ENCODE measurements at regions of chr5 and their contacts with region 1.

Region 1: DNA sequence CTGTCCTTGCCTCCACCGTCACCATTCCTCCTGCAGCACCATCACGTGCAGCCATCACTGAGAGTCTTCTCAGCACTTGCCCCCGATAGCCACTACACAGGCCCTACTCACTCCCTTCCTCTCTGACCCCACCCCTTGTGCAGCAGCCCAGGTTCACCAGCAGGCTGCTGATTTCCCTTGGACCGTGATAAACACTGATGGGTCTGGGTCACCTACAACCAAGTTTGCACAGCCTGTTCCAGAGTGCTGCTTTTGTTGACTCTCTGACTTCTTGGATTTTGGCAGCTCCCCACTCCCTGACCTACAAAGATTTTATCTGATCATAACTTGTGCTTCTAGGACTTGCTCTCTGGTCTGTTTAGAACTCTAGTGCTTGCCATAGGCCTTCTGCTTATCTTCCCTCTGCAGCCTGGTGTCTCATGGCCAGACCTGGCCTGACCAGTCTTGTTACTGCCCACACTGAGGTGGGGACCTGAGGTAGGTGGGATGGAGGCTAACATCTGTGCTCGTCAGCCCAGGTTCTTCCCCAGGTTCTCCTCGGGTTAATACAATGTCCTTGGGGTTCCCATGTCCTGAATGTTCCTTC is 109.3 kb downstream of the TARS1 start:
- DNase-seq: no peak
- H3K4me3 ChIP-seq: no peak overlapping the region
- H3K27ac ChIP-seq: no peak overlapping the region
- H3K4me1 ChIP-seq: no peaks in the 10 kb centered on the region
- H3K27me3 ChIP-seq: no peaks in the 10 kb centered on the region
- CTCF ChIP-seq: no peak
- POLR2A ChIP-seq: no peak

Region 2: DNA sequence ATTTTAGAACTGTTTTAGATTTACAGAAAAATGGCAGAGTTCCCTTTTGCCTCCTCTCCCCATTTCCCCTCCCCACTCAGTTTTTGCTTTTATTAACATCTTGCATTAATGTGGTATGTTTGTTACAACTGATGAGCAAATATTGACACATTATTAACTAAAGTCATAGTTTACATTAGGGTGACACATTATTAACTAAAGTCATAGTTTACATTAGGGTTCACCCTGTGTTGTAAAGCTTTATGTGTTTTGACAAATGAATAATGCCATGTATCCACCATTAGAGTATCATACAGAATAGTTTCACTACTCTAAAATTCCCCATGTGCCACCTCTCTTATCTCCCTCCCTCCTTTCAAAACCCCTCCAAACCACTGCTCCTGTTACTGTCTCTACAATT is 576.4 kb before region 1 on chr5:
- intact Hi-C with region 1: loop called (anchors 5 kb)
- DNase-seq: no peak
- H3K4me3 ChIP-seq: no peak overlapping the region
- H3K27ac ChIP-seq: no peak overlapping the region
- H3K4me1 ChIP-seq: no peaks in the 10 kb centered on the region
- H3K27me3 ChIP-seq: no peaks in the 10 kb centered on the region
- CTCF ChIP-seq: no peak
- POLR2A ChIP-seq: no peak

Measured in breast epithelium (tissue), 4 donors.